ENCODE measurements at regions of chr19 and their contacts with region 1.

Region 1: GRCh38 chr19:41144403-41144802 is 30.2 kb downstream of the CYP2F1 start:
- DNase-seq: peak; percentile 64 to 75
- H3K4me3 ChIP-seq: no peak overlapping the region
- H3K27ac ChIP-seq: no peak overlapping the region
- H3K4me1 ChIP-seq: no peaks in the 10 kb centered on the region
- H3K27me3 ChIP-seq: no peaks in the 10 kb centered on the region
- CTCF ChIP-seq: peak; percentile 90

Region 2: GRCh38 chr19:40822161-40822560 is 322.2 kb before region 1 on chr19:
- CTCF ChIA-PET with region 1: no interaction called
- POLR2A ChIA-PET with region 1: no interaction called
- intact Hi-C with region 1: loop called (anchors 1 kb)
- DNase-seq: no peak
- H3K4me3 ChIP-seq: no peak overlapping the region
- H3K27ac ChIP-seq: no peak overlapping the region
- H3K4me1 ChIP-seq: 0 out of 2 replicates have a peak, but pooled peaks cover 5% of the 10 kb centered on the region
- H3K27me3 ChIP-seq: no peaks in the 10 kb centered on the region
- CTCF ChIP-seq: no peak

Region 3: DNA sequence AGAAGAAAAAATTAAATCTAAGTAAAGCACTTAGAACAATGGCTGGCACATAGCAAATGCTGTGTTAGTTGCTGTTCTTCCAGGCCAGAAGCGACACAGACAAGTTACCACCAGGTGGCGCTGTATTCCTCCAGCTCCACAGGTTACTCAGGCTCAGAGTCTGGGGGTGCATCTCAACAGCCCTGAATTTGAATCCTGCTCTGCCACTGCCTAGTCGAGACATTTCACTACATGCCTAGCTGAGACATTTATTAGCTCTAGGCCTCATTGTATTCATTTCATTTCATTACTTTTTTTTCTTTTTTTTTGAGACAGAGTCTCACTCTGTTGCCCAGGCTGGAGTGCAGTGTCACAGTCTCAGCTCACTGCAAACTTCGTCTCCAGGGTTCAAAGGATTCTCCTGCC is 169.8 kb before region 1 on chr19:
- CTCF ChIA-PET with region 1: interaction called, 4 read pairs
- POLR2A ChIA-PET with region 1: no interaction called
- intact Hi-C with region 1: loop called (anchors 1 kb)
- DNase-seq: peak; percentile 42 to 63
- H3K4me3 ChIP-seq: no peak overlapping the region
- H3K27ac ChIP-seq: no peak overlapping the region
- H3K4me1 ChIP-seq: no peaks in the 10 kb centered on the region
- H3K27me3 ChIP-seq: peaks cover 7% of the 10 kb centered on the region; the same call in 1 of the 2 replicates
- CTCF ChIP-seq: peak; percentile 94

Region 4: GRCh38 chr19:41218615-41219507 is 74.5 kb after region 1 on chr19 and contains the start of gene AXL:
- CTCF ChIA-PET with region 1: no interaction called
- POLR2A ChIA-PET with region 1: no interaction called
- intact Hi-C with region 1: no loop called
- DNase-seq: peak in 1 of 2 experiments; percentile 87
- H3K4me3 ChIP-seq: peak within 1 kb of the TSS; percentile 68
- H3K27ac ChIP-seq: no peak within 1 kb of the TSS
- H3K4me1 ChIP-seq: peaks cover 25% of the 10 kb centered on the region
- H3K27me3 ChIP-seq: no peaks in the 10 kb centered on the region
- CTCF ChIP-seq: no peak
- total RNA-seq, gene AXL: 236 and 271 TPM in 2 replicates

Region 5: GRCh38 chr19:41302624-41303351 is 158.4 kb after region 1 on chr19:
- CTCF ChIA-PET with region 1: no interaction called
- POLR2A ChIA-PET with region 1: no interaction called
- intact Hi-C with region 1: no loop called
- DNase-seq: no peak
- H3K4me3 ChIP-seq: no peak overlapping the region
- H3K27ac ChIP-seq: no peak overlapping the region
- H3K4me1 ChIP-seq: no peaks in the 10 kb centered on the region
- H3K27me3 ChIP-seq: no peaks in the 10 kb centered on the region
- CTCF ChIP-seq: no peak